GM12878 (cell line): ENCODE measurements at regions of chr4 and their contacts with region 1.

Region 1: DNA sequence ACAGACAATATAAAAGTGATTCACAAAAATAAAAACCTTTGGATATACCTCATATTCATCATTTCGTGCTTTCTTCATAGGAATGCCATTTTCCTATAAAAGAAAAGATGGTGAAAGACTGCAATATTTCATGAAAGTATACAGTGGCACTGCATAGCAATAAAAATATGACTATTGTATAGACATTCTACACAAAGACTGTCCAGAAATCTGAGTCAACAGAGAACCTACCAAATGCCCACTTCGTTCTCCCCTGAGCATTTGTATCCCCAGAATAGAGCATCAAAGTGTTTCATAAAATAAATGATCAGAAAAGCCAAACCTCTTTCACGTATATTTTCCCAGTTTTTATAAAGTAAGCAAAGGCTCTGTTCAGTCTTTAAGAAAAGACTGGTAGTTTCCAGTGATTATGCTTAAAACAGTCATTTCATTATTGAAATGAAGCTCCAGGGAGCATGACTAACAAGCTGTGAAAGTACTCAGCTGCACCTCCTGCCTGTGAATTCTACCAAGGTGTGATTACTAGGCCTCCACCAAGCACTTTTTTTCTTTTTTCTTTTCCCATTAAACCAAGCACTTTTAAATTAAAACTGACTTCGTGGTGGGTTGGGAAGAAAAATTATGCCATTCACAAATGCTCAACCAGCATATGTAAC is 20.2 kb downstream of the PPA2 start:
- DNase-seq: no peak
- ATAC-seq: peak; percentile 95
- H3K4me3 ChIP-seq: no peak overlapping the region
- H3K27ac ChIP-seq: no peak overlapping the region; the same call in 1 of the 2 replicates
- H3K4me1 ChIP-seq: no peaks in the 10 kb centered on the region
- H3K27me3 ChIP-seq: no peaks in the 10 kb centered on the region
- CTCF ChIP-seq: peak in 2 of 3 experiments; percentile 9 to 39; a peak in 2 of 6 replicates
- EP300 ChIP-seq: peak; percentile 66 to 72; a peak in 2 of 4 replicates
- POLR2A ChIP-seq: no peak
- RAD21 ChIP-seq: 0 out of 2 replicates have a peak, but pooled peaks have one; percentile 22

Region 2: DNA sequence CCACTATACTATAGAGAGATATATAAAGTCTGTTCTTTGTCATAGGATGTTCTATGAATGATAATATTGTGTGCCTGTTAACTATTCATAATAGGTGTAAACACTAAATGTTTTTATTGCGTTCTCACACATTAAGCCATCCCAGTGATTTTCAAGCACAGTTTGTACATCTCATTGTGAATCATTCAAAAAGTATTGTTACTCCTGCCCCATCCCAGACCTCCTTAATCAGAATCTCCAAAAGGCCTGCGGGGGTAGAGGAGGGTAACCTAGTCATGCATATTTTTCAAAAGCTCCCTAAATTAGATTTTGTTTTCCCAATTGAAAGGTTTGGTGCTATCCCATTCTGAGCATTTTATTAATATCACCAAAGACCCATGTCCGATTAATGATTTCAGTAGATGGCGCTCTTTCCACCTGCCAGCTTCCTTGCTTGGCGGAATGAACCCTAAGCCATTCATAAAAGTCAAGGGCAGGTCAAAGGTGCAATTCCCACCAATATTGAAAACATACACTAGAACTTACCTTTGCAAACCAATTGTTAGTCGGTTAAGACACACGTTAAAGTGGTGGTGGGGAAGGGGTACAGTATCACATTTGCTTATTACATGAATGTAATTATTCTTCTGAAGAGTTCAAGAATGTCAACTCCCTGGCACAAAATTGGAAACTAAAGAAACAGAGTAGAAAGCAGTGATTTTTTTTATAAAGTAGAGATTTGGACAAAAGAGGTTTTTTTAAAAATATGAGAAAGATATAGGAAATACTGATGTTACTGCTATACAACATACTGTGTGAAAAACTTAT is 312.8 kb before region 1 on chr4:
- CTCF ChIA-PET with region 1: interaction called, 27 read pairs
- POLR2A ChIA-PET with region 1: interaction called, 3 read pairs
- RAD21 ChIA-PET with region 1: interaction called, 3 read pairs
- SMC1A ChIA-PET with region 1: interaction called, 12 read pairs
- in situ Hi-C with region 1: no loop called
- intact Hi-C with region 1: no loop called
- DNase-seq: no peak
- ATAC-seq: peak; percentile 59
- H3K4me3 ChIP-seq: no peak overlapping the region
- H3K27ac ChIP-seq: no peak overlapping the region
- H3K4me1 ChIP-seq: no peaks in the 10 kb centered on the region; the same call in none of the 2 replicates
- H3K27me3 ChIP-seq: no peaks in the 10 kb centered on the region
- CTCF ChIP-seq: peak; percentile 51 to 83 (median 60); a peak in 5 of 6 replicates
- EP300 ChIP-seq: no peak
- POLR2A ChIP-seq: no peak
- RAD21 ChIP-seq: peak; percentile 92

Region 3: GRCh38 chr4:105306158-105306781 is 147.4 kb before region 1 on chr4:
- CTCF ChIA-PET with region 1: interaction called, 3 read pairs
- POLR2A ChIA-PET with region 1: interaction called, 4 read pairs
- RAD21 ChIA-PET with region 1: interaction called, 21 read pairs
- SMC1A ChIA-PET with region 1: interaction called, 5 read pairs
- in situ Hi-C with region 1: no loop called
- intact Hi-C with region 1: no loop called
- DNase-seq: peak; percentile 91
- ATAC-seq: peak; percentile 91
- H3K4me3 ChIP-seq: peak overlapping the region; percentile 24; the same call in 1 of the 2 replicates
- H3K27ac ChIP-seq: peak overlapping the region; percentile 86
- H3K4me1 ChIP-seq: peaks cover 14% of the 10 kb centered on the region
- H3K27me3 ChIP-seq: no peaks in the 10 kb centered on the region
- CTCF ChIP-seq: no peak
- EP300 ChIP-seq: peak; percentile 75 to 77; a peak in 3 of 4 replicates
- POLR2A ChIP-seq: peak; percentile 43; the same call in 1 of the 2 replicates
- RAD21 ChIP-seq: 0 out of 2 replicates have a peak, but pooled peaks have one; percentile 3

Region 4: DNA sequence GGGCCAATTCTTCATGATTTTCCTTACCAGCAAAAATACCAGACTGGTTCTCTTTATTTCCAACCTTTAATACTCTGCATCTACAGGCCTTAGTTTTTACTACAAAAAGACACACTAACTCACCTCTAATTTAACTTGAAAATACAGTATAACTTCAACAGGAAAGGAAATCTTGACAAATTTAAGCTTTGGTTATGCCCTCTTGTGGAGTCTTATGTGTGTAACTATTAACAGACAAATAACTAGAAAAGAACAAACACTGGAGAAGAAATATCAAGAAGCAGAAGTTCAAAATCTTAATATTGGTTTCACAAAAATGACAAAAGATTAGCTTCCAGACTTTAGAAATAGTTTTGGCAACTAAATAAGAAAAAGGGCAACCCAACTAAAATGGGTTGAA is 12.8 kb before region 1 on chr4:
- CTCF ChIA-PET with region 1: interaction called, 10 read pairs
- POLR2A ChIA-PET with region 1: no interaction called
- RAD21 ChIA-PET with region 1: interaction called, 3 read pairs
- SMC1A ChIA-PET with region 1: interaction called, 9 read pairs
- in situ Hi-C with region 1: no loop called
- intact Hi-C with region 1: no loop called
- DNase-seq: no peak
- ATAC-seq: no peak
- H3K4me3 ChIP-seq: no peak overlapping the region
- H3K27ac ChIP-seq: no peak overlapping the region
- H3K4me1 ChIP-seq: no peaks in the 10 kb centered on the region
- H3K27me3 ChIP-seq: no peaks in the 10 kb centered on the region
- CTCF ChIP-seq: no peak
- EP300 ChIP-seq: no peak
- POLR2A ChIP-seq: no peak
- RAD21 ChIP-seq: no peak